CD8-positive, alpha-beta T cell (primary cell): ENCODE measurements at regions of chr9 and their contacts with region 1.

Region 1: GRCh38 chr9:97710356-97711222 is 13.4 kb upstream of the XPA start:
- DNase-seq: peak in 8 of 9 experiments; percentile 20 to 79 (median 50)
- ATAC-seq: peak; percentile 74
- H3K4me3 ChIP-seq: no peak overlapping the region
- H3K4me3 Mint-ChIP-seq: peak overlapping the region; percentile 35
- H3K27ac ChIP-seq: no peak overlapping the region
- H3K27ac Mint-ChIP-seq: peak overlapping the region; percentile 45
- H3K4me1 ChIP-seq: peaks cover 24% of the 10 kb centered on the region
- H3K4me1 Mint-ChIP-seq: peaks cover 32% of the 10 kb centered on the region
- H3K27me3 ChIP-seq: no peaks in the 10 kb centered on the region
- H3K27me3 Mint-ChIP-seq: peaks cover 8% of the 10 kb centered on the region
- CTCF ChIP-seq: peak; percentile 96

Region 2: DNA sequence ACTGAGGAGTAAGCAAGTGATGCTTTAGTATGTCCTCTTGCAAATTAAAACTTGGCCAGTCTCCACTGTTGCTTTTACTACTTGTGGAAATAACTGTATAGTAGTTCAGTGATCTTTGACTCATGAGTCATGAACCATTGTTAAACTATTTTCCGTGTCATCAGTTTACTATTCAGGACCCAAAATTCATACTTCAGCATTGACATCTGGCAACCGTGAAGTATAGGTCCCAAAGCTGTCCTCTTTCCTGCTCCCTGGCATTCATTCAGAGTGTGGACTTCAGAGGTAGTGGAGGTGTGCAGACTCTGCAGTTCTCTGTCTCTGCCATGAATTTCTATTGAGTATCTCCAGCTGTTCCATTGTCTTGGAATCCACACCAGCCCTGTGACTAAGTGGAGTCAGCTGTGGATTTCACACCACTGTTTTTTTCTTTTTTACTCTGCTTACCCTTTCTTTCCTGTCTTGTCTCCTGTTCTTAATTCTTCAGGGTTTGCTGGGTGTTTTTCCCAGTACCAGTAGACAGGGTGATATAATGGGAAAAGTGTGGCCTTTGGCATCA is 291.2 kb before region 1 on chr9:
- CTCF ChIA-PET with region 1: no interaction called
- POLR2A ChIA-PET with region 1: no interaction called
- intact Hi-C with region 1: no loop called
- DNase-seq: no peak
- ATAC-seq: no peak
- H3K4me3 ChIP-seq: no peak overlapping the region
- H3K4me3 Mint-ChIP-seq: no peak overlapping the region
- H3K27ac ChIP-seq: no peak overlapping the region
- H3K27ac Mint-ChIP-seq: no peak overlapping the region
- H3K4me1 ChIP-seq: no peaks in the 10 kb centered on the region
- H3K4me1 Mint-ChIP-seq: peaks cover 22% of the 10 kb centered on the region
- H3K27me3 ChIP-seq: no peaks in the 10 kb centered on the region
- H3K27me3 Mint-ChIP-seq: no peaks in the 10 kb centered on the region
- CTCF ChIP-seq: no peak

Region 3: DNA sequence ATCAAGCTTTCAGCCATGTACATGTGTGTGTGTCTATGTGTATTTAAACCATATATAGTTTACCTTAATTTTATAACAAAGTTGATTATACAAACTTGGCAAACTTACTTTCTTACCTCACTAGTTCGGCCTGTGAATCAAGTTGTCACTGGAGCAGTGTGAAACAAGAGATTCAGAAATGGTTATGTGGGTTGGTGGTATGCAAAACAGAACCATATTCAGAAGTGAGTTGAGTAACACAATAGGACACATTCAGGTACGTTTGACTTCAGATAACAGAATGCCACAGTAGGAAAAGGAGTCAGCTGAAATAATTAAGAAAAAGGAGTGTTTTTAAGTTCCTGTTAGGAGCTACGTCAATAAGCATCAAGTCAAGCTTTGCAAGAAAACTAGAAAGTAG is 34.9 kb before region 1 on chr9:
- CTCF ChIA-PET with region 1: no interaction called
- POLR2A ChIA-PET with region 1: no interaction called
- intact Hi-C with region 1: no loop called
- DNase-seq: no peak
- ATAC-seq: no peak
- H3K4me3 ChIP-seq: no peak overlapping the region
- H3K4me3 Mint-ChIP-seq: no peak overlapping the region
- H3K27ac ChIP-seq: no peak overlapping the region
- H3K27ac Mint-ChIP-seq: no peak overlapping the region
- H3K4me1 ChIP-seq: no peaks in the 10 kb centered on the region
- H3K4me1 Mint-ChIP-seq: peaks cover 12% of the 10 kb centered on the region
- H3K27me3 ChIP-seq: no peaks in the 10 kb centered on the region
- H3K27me3 Mint-ChIP-seq: no peaks in the 10 kb centered on the region
- CTCF ChIP-seq: no peak

Region 4: GRCh38 chr9:97803167-97804058 is 92.8 kb after region 1 on chr9:
- CTCF ChIA-PET with region 1: no interaction called
- POLR2A ChIA-PET with region 1: no interaction called
- intact Hi-C with region 1: loop called (anchors 2 to 5 kb)
- DNase-seq: peak; percentile 47 to 86 (median 77)
- ATAC-seq: peak; percentile 97
- H3K4me3 ChIP-seq: peak overlapping the region; percentile 43 to 56
- H3K4me3 Mint-ChIP-seq: peak overlapping the region; percentile 81
- H3K27ac ChIP-seq: no peak overlapping the region
- H3K27ac Mint-ChIP-seq: peak overlapping the region; percentile 42
- H3K4me1 ChIP-seq: peaks cover 7% of the 10 kb centered on the region
- H3K4me1 Mint-ChIP-seq: peaks cover 5% of the 10 kb centered on the region
- H3K27me3 ChIP-seq: peaks cover 3 to 5% of the 10 kb centered on the region in 2 experiments
- H3K27me3 Mint-ChIP-seq: peaks cover 13% of the 10 kb centered on the region
- CTCF ChIP-seq: no peak

Region 5: DNA sequence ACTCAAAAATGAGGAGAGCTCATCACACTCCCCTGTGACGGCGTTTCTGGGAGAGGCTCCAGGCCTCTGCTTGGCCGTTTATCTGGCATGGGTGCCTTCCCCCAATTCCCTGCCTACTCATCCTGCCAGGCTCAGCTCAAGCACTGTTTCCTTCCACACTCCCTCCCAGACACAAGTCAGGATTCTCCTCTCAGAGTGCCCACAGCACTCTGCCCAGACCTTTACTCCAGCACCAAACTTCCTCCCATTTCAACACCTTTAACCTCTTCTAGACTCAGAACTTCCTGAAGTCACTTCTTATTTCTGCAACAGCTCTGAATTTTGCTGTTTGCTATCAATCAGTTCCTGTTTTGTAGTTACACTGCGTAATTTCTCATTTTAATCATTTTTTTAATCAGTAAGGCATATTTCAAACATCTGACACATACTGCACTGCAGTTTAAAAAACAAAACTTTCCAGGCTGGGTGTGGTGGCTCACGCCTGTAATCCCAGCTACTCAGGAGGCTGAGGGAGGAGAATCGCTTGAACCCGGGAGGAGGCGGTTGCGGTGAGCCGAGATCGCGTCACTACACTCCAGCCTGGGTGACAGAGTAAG is 195.7 kb after region 1 on chr9:
- CTCF ChIA-PET with region 1: interaction called, 9 read pairs
- POLR2A ChIA-PET with region 1: interaction called, 3 read pairs
- intact Hi-C with region 1: loop called (anchors 1 to 2 kb)
- DNase-seq: peak in 4 of 9 experiments; percentile 56 to 78 (median 68)
- ATAC-seq: peak; percentile 26
- H3K4me3 ChIP-seq: peak overlapping the region; percentile 4 to 34
- H3K4me3 Mint-ChIP-seq: peak overlapping the region; percentile 80
- H3K27ac ChIP-seq: peak overlapping the region; percentile 54 to 79
- H3K27ac Mint-ChIP-seq: peak overlapping the region; percentile 97
- H3K4me1 ChIP-seq: peaks cover 92% of the 10 kb centered on the region
- H3K4me1 Mint-ChIP-seq: peaks cover 88% of the 10 kb centered on the region
- H3K27me3 ChIP-seq: no peaks in the 10 kb centered on the region
- H3K27me3 Mint-ChIP-seq: no peaks in the 10 kb centered on the region
- CTCF ChIP-seq: no peak

Region 6: DNA sequence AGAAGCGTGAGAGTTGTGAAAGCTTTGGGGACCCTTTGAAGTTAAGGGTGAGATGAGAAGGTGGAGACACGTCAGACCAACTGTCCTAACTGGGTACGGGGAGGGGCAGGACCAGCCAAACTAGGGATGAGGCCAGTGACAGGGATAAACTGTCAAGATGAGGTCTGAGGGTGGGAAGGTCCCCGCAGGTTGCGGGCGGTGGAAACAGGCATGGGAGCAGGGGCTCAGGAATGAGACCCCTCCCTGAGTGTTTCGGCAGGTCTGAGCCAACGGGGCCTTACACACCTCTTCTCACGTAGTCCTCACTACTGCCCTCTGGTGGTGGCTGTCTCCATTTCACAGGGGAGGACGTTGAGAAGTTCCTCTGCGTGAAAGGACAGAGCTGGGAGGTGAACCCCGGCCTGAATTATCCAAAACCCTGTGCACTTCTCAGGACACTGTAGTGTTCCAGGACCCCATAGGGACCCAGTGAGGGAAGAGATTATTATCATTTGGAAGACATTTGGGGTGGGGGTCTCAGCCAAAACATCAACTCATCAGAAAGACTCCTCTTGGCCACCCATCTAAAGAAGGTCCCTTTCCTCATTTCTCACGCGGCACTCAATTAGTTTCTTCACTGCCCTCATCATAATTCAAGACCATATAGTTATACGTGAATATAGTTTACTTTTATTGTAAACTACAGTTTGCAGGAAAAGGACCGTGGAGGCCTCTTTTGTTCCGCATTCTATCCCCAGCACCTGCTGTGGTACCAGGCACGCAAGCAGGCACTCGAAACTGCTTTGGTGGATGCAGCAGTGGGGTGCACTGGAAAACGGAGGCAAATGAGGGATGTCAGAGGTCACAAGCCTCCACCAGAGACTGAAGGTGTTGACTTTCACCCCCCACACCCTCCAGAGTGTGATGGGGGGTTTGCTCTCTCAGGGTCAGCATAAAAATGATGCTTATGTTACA is 324.3 kb after region 1 on chr9:
- CTCF ChIA-PET with region 1: no interaction called
- POLR2A ChIA-PET with region 1: no interaction called
- intact Hi-C with region 1: loop called (anchors 1 kb)
- DNase-seq: peak; percentile 77 to 97 (median 91)
- ATAC-seq: peak; percentile 99
- H3K4me3 ChIP-seq: no peak overlapping the region
- H3K4me3 Mint-ChIP-seq: no peak overlapping the region
- H3K27ac ChIP-seq: no peak overlapping the region
- H3K27ac Mint-ChIP-seq: no peak overlapping the region
- H3K4me1 ChIP-seq: no peaks in the 10 kb centered on the region
- H3K4me1 Mint-ChIP-seq: peaks cover 6% of the 10 kb centered on the region
- H3K27me3 ChIP-seq: no peaks in the 10 kb centered on the region
- H3K27me3 Mint-ChIP-seq: no peaks in the 10 kb centered on the region
- CTCF ChIP-seq: peak; percentile 80

Region 7: GRCh38 chr9:98775831-98776441 is 1065.3 kb after region 1 on chr9:
- CTCF ChIA-PET with region 1: no interaction called
- POLR2A ChIA-PET with region 1: no interaction called
- intact Hi-C with region 1: loop called in 1 of 2 experiments (anchors 5 kb)
- DNase-seq: peak in 4 of 9 experiments; percentile 28 to 59 (median 46)
- ATAC-seq: no peak
- H3K4me3 ChIP-seq: no peak overlapping the region
- H3K4me3 Mint-ChIP-seq: no peak overlapping the region
- H3K27ac ChIP-seq: no peak overlapping the region
- H3K27ac Mint-ChIP-seq: no peak overlapping the region
- H3K4me1 ChIP-seq: no peaks in the 10 kb centered on the region
- H3K4me1 Mint-ChIP-seq: no peaks in the 10 kb centered on the region
- H3K27me3 ChIP-seq: no peaks in the 10 kb centered on the region
- H3K27me3 Mint-ChIP-seq: no peaks in the 10 kb centered on the region
- CTCF ChIP-seq: no peak